PC-3 (cell line): ENCODE measurements at regions of chr7 and their contacts with region 1.

Region 1: GRCh38 chr7:37916673-37917660 is at the start of gene SFRP4:
- DNase-seq: peak; percentile 78
- ATAC-seq: peak; percentile 51
- H3K4me3 ChIP-seq: peak within 1 kb of the TSS; percentile 68
- H3K27ac ChIP-seq: no peak within 1 kb of the TSS
- H3K4me1 ChIP-seq: peaks cover 12% of the 10 kb centered on the region; the same call in 1 of the 2 replicates
- H3K27me3 ChIP-seq: no peaks in the 10 kb centered on the region
- CTCF ChIP-seq: peak; percentile 76
- total RNA-seq, gene SFRP4: not detected in 2 replicates

Region 2: GRCh38 chr7:37796138-37796775 is 120.7 kb before region 1 on chr7:
- CTCF ChIA-PET with region 1: no interaction called
- POLR2A ChIA-PET with region 1: no interaction called
- intact Hi-C with region 1: no loop called
- DNase-seq: no peak
- ATAC-seq: no peak
- H3K4me3 ChIP-seq: no peak overlapping the region
- H3K27ac ChIP-seq: no peak overlapping the region
- H3K4me1 ChIP-seq: no peaks in the 10 kb centered on the region
- H3K27me3 ChIP-seq: no peaks in the 10 kb centered on the region
- CTCF ChIP-seq: no peak

Region 3: DNA sequence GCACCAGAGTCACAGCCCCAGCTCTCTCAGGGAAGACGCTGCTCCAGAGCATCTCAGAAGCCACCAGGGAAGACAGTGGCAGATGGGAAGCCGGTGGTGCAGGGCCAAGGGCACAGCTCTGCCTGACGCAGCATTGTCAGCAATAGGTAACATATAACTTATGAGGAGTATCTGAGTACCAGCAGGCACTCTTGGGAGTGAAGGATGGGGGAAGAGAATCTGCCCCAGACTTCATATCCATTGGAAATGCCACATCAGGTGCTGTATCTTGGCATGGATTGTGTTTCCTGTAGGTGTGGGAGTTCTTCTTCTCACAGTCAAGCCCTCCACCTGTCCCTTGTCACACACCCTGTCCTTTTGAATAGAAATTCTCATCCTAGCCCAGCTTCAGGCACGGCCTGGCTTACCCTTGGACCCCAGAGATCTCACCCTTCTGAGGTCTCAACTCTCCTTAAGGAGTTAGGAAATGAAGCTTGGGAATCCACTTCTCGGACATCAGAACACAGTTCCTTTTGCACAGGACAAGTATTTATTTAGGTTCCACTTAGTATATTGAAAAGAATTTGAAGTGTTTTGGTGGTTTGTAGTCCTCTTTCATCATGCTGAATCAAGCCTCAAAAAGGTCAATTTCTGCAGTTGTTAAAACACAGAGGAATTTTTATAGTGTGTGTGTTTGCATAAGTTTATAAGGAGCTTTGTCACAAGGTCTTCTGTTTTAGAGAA is 13.4 kb after region 1 on chr7:
- CTCF ChIA-PET with region 1: interaction called, 5 read pairs
- POLR2A ChIA-PET with region 1: interaction called, 12 read pairs
- intact Hi-C with region 1: no loop called
- DNase-seq: peak; percentile 78
- ATAC-seq: peak; percentile 89
- H3K4me3 ChIP-seq: peak overlapping the region; percentile 15; the same call in 1 of the 2 replicates
- H3K27ac ChIP-seq: peak overlapping the region; percentile 52
- H3K4me1 ChIP-seq: peaks cover 16% of the 10 kb centered on the region
- H3K27me3 ChIP-seq: no peaks in the 10 kb centered on the region
- CTCF ChIP-seq: no peak

Region 4: DNA sequence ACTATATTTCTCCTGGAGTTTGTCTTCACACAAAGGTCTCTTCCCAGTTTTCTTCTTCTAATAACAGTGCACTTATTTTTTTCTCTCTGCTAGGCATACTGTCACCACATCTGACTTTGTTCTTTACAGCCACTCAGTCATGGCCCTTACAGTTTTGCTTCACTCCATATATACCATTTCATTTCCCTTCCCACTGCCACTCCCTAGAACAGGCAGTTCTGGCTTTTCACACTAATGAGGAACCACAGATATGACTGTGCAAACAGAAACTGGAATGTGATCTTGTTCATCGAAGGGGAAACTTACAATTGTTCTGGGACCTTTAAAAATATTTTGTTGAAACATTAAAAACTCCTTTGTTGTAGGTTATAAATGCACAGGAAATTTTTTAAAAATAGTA is 70.8 kb after region 1 on chr7:
- CTCF ChIA-PET with region 1: interaction called, 4 read pairs
- POLR2A ChIA-PET with region 1: no interaction called
- intact Hi-C with region 1: loop called (anchors 2 kb)
- DNase-seq: peak; percentile 84
- ATAC-seq: peak; percentile 100
- H3K4me3 ChIP-seq: no peak overlapping the region
- H3K27ac ChIP-seq: peak overlapping the region; percentile 24; the same call in 1 of the 2 replicates
- H3K4me1 ChIP-seq: peaks cover 11% of the 10 kb centered on the region
- H3K27me3 ChIP-seq: no peaks in the 10 kb centered on the region
- CTCF ChIP-seq: no peak

Region 5: GRCh38 chr7:38027884-38028455 is 111.0 kb after region 1 on chr7:
- CTCF ChIA-PET with region 1: interaction called, 6 read pairs
- POLR2A ChIA-PET with region 1: no interaction called
- intact Hi-C with region 1: loop called (anchors 2 kb)
- DNase-seq: peak; percentile 62
- ATAC-seq: peak; percentile 52
- H3K4me3 ChIP-seq: no peak overlapping the region
- H3K27ac ChIP-seq: no peak overlapping the region
- H3K4me1 ChIP-seq: peaks cover 8% of the 10 kb centered on the region
- H3K27me3 ChIP-seq: no peaks in the 10 kb centered on the region
- CTCF ChIP-seq: no peak

Region 6: GRCh38 chr7:38040831-38041230 is 123.9 kb after region 1 on chr7:
- CTCF ChIA-PET with region 1: no interaction called
- POLR2A ChIA-PET with region 1: no interaction called
- intact Hi-C with region 1: loop called (anchors 1 kb)
- DNase-seq: no peak
- ATAC-seq: no peak
- H3K4me3 ChIP-seq: no peak overlapping the region
- H3K27ac ChIP-seq: no peak overlapping the region
- H3K4me1 ChIP-seq: no peaks in the 10 kb centered on the region
- H3K27me3 ChIP-seq: no peaks in the 10 kb centered on the region
- CTCF ChIP-seq: no peak

Region 7: DNA sequence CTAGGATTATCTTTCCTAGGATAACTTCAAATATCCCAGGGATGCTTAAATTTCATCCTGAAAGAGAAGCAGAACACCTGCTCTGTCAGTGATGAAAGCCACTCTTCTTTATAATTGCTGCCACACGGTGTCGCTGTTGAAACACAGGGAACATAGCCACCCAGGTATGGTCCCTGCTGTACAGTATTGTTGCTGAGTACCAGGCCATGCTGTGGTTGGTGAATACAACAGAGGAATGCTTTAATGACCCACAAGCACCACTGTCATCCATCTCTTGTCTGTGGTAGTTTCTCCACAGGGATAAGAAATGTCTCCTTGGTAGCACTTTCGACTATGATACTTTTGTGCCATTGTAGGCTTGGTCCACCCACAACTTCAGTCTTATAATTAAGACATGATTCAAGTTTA is 190.5 kb after region 1 on chr7:
- CTCF ChIA-PET with region 1: interaction called, 4 read pairs
- POLR2A ChIA-PET with region 1: no interaction called
- intact Hi-C with region 1: loop called (anchors 1 kb)
- DNase-seq: peak; percentile 80
- ATAC-seq: peak; percentile 91
- H3K4me3 ChIP-seq: no peak overlapping the region
- H3K27ac ChIP-seq: no peak overlapping the region
- H3K4me1 ChIP-seq: no peaks in the 10 kb centered on the region
- H3K27me3 ChIP-seq: peaks cover 10% of the 10 kb centered on the region
- CTCF ChIP-seq: peak; percentile 82

Region 8: GRCh38 chr7:38222481-38223096 is 305.6 kb after region 1 on chr7:
- CTCF ChIA-PET with region 1: no interaction called
- POLR2A ChIA-PET with region 1: no interaction called
- intact Hi-C with region 1: loop called (anchors 1 kb)
- DNase-seq: peak; percentile 79
- ATAC-seq: peak; percentile 79
- H3K4me3 ChIP-seq: no peak overlapping the region
- H3K27ac ChIP-seq: no peak overlapping the region
- H3K4me1 ChIP-seq: no peaks in the 10 kb centered on the region
- H3K27me3 ChIP-seq: no peaks in the 10 kb centered on the region
- CTCF ChIP-seq: peak; percentile 89

Region 9: DNA sequence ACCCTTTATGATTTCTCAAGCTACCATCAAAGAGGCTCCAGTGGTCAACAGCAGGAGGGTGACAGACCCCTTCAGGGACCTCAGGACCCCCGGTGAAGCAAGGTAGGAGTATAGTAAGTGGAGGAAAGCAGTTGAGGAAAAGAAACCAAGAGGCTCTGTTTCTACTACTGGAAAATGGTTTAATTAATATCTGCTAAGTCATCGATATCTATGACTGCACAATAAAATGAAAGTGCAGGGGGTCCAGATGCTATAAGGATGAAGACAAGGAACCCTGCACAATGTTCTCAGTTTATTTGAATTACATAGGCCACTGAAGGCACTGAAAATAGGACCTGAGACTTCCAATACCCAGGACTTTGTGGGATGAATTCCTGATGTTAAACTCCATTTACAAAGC is 690.5 kb after region 1 on chr7:
- CTCF ChIA-PET with region 1: no interaction called
- POLR2A ChIA-PET with region 1: no interaction called
- intact Hi-C with region 1: no loop called
- DNase-seq: no peak
- ATAC-seq: no peak
- H3K4me3 ChIP-seq: no peak overlapping the region
- H3K27ac ChIP-seq: no peak overlapping the region
- H3K4me1 ChIP-seq: no peaks in the 10 kb centered on the region
- H3K27me3 ChIP-seq: peaks cover 48% of the 10 kb centered on the region
- CTCF ChIP-seq: no peak